GM10248 (cell line): ENCODE measurements at regions of chr11 and their contacts with region 1.

Region 1: DNA sequence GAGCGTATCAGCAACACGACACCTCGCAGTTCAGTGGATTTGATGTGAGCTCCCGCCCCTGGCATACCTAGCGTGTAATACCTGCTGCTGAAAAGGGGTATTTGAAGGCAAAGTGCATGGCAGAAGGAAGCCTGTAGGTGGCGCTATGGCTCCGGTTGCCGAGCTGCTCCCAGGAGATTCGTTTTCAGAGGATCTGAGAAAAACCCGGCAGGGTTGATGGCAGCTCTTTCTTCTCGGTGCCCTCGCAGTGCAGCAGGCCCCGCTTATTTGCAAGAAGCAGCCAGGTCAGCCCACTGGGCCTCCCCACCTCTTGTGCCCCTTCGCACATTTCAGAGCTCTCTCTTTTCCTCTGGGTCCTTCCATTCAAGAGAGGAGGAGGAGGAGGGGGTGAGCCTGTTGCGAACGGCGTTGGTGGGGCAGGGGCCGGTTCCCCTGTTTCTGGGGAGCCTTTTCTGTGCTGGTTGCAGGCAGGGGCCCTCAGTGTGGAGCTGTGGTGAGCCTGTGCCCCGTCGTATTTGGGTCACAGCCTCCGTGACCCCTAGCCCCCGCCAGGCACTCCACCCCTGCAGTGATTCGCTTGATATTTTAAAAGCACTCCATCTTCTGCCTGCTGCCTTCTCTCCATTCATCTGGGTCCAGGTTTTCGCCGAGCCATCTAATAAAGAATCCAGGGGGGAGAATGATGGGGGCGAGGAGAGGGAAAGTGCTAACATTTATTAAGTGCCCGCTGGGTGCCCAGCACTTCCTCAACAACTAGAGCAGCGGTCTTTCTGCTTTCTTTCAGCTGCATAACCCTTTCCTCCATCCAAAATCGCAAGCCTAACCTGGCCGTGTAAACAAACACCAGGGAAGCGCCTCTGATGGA is 85.3 kb upstream of the SYT13 start:
- DNase-seq: peak; percentile 76
- CTCF ChIP-seq: peak; percentile 79

Region 2: DNA sequence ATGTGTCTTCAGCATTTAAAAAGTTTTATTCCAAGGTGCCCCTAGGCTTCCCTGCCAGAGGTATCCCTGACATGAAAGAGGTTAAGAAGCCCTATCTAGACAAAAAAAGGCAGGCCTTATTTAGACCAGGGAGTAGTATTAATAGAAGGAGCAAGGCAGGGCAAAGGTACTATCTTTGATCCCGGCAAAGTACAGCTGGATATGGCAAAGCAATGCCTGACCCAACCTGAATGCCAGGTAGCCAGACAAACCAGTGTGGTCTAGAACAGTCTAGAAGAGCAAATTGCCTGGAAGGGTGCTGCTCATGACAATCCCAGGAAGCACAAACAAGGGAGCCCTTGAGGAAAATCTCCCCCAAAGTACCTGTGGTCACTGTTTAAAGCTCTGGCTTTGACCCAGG is 22.8 kb before region 1 on chr11:
- CTCF ChIA-PET with region 1: interaction called, 10 read pairs
- POLR2A ChIA-PET with region 1: no interaction called
- DNase-seq: no peak
- CTCF ChIP-seq: no peak

Region 3: GRCh38 chr11:45383224-45383623 is 11.7 kb after region 1 on chr11:
- CTCF ChIA-PET with region 1: interaction called, 18 read pairs
- POLR2A ChIA-PET with region 1: no interaction called
- DNase-seq: no peak
- CTCF ChIP-seq: no peak